ENCODE measurements at regions of chr6 and their contacts with region 1.

Region 1: DNA sequence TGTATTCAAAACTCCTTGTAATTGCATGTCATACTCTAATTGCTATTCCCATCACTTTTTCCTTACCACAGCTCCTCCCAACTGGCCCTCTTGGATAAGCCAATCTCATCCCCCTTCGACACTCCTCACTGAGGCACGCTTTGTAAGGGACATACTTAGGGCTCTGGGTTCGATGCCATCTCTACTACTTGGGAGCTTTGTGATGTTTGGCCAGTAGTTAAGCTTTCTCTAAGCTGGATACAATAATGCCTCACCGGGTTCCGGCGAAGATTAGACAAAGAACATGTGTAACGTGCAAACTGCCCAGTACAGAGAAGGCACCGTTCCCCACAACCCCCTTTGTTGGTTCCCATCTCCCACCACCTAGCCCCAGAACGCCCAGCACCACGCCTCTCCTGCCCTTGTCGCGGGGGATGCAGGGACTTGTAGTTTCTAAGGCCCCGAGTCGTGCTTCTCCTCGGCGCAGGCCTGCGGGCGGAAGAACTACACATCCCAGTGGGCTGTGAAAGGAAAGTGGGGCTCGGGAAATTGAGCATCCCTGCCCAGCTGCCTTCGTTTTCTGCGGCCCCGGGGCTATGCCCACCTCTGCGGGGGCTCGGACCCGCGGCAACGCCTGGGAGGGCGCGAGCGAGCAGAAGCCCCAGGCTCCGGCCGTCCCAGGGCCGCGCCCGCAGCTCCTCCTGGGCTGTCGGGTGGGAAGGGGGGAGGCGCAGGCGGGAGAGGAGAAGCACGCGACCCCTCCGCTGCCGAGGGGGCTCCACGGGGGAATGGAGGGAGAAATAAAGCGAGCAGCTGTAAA is 1.1 kb upstream of the ZDHHC14 start:
- DNase-seq: peak; percentile 75 to 94
- H3K4me3 ChIP-seq: peak overlapping the region; percentile 87 to 96
- H3K27ac ChIP-seq: peak overlapping the region; percentile 87 to 91
- H3K4me1 ChIP-seq: peaks cover 0 to 12% of the 10 kb centered on the region in 2 donors
- H3K27me3 ChIP-seq: no peaks in the 10 kb centered on the region
- CTCF ChIP-seq: no peak

Region 2: DNA sequence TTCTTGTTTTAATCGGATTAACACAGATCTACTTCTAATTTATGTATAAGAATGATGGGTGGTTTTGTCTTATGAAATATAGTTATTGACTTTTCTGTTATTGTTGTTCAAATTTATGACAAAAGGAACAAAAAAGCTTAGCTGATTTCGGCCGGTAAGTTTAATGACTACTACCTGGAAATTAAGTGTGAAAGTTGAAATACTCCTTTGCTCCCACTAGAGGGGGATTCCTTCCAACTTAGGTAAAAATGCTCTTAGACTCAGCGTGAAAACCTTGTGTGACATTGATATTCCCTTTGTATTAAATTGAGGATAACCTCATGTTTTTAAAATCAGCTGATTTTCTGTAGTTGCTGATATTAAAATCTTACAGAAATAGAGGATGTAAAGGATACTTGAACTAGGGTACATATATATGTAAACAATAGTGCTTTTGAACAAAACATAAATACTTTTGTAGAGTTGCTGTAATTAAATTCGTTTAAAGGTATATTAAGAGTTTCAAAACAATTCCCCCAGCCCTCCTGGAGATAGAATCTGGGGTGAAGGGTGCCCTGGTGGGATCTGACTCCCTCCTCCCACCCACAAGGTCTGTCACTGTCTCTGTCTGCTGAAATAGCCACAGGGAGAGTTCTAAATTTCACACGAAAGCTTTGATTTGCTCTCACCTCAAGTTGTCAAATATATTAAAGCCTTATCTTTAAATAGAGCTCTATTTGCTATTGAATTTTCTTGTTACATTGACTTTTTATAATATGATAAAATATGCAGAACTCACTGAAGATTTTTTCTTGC is 345.2 kb before region 1 on chr6:
- intact Hi-C with region 1: loop called (anchors 5 kb)
- DNase-seq: no peak
- H3K4me3 ChIP-seq: no peak overlapping the region
- H3K27ac ChIP-seq: no peak overlapping the region
- H3K4me1 ChIP-seq: peaks cover 4 to 39% of the 10 kb centered on the region in 2 donors
- H3K27me3 ChIP-seq: no peaks in the 10 kb centered on the region
- CTCF ChIP-seq: peak; percentile 54 to 62 (median 61)

Region 3: GRCh38 chr6:157314705-157315321 is 65.0 kb before region 1 on chr6:
- intact Hi-C with region 1: loop called (anchors 1 kb)
- DNase-seq: no peak
- H3K4me3 ChIP-seq: no peak overlapping the region
- H3K27ac ChIP-seq: no peak overlapping the region
- H3K4me1 ChIP-seq: peaks cover 0 to 4% of the 10 kb centered on the region in 2 donors
- H3K27me3 ChIP-seq: no peaks in the 10 kb centered on the region
- CTCF ChIP-seq: peak; percentile 63 to 84 (median 83)

Region 4: GRCh38 chr6:157531169-157531985 is 151.5 kb after region 1 on chr6:
- intact Hi-C with region 1: loop called (anchors 5 kb)
- DNase-seq: no peak
- H3K4me3 ChIP-seq: no peak overlapping the region
- H3K27ac ChIP-seq: no peak overlapping the region
- H3K4me1 ChIP-seq: peaks cover 4 to 17% of the 10 kb centered on the region in 2 donors
- H3K27me3 ChIP-seq: no peaks in the 10 kb centered on the region
- CTCF ChIP-seq: no peak

Region 5: DNA sequence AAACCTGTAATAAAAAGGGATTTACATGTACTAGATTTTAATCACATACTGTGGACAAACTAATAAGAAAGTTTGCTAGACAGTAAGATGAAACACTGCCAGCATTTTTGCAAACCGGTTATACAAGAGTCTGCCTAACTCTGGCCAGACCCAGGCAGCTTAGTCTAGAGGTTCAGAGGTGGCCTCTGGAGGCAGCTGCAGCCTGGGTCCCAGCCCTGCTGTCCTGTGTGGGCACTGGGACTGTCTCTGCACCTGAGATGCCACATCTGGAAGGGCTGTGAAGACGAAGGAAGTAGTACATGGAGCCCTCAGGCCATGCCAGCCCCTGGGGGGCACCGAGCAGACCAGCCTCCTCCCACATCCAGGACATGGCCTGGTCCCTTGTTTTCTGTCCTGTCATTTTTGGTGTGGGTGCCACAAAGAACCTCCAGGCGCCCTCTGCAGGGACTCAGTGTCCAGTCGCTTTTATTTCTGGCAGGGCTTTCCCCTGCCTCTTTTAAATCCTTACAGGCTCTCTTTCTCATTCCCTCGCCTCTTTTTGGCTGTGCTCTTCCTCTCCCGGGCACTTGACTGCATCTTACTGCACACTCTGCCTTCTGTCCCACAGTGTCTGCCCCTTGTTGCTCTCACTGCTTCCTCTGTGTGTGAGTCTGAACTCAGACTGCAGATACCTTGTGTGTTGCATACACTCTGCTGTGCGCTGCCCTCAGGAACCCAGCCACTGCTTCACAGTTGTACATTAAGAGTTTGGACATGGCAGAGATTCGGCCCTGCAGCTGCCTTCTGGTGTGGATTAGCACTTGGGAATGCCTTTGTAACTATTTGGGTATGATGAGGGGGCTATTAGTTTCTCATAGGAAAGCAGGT is 217.8 kb after region 1 on chr6:
- intact Hi-C with region 1: loop called (anchors 5 kb)
- DNase-seq: no peak
- H3K4me3 ChIP-seq: no peak overlapping the region
- H3K27ac ChIP-seq: no peak overlapping the region
- H3K4me1 ChIP-seq: no peaks in the 10 kb centered on the region
- H3K27me3 ChIP-seq: no peaks in the 10 kb centered on the region
- CTCF ChIP-seq: peak; percentile 23 to 64 (median 45)